ENCODE measurements at regions of chr2 and their contacts with region 1.

Region 1: GRCh38 chr2:203730076-203730729 is 23.8 kb downstream of the CD28 start:
- DNase-seq: no peak
- H3K4me3 Mint-ChIP-seq: peak overlapping the region; percentile 1
- H3K27ac Mint-ChIP-seq: peak overlapping the region; percentile 83
- H3K4me1 Mint-ChIP-seq: peaks cover 75% of the 10 kb centered on the region
- H3K27me3 Mint-ChIP-seq: no peaks in the 10 kb centered on the region

Region 2: GRCh38 chr2:203718087-203718486 is 12.1 kb before region 1 on chr2:
- intact Hi-C with region 1: loop called (anchors 1 kb)
- DNase-seq: peak; percentile 66
- H3K4me3 Mint-ChIP-seq: peak overlapping the region; percentile 48
- H3K27ac Mint-ChIP-seq: peak overlapping the region; percentile 91
- H3K4me1 Mint-ChIP-seq: peaks cover 93% of the 10 kb centered on the region
- H3K27me3 Mint-ChIP-seq: no peaks in the 10 kb centered on the region

Region 3: DNA sequence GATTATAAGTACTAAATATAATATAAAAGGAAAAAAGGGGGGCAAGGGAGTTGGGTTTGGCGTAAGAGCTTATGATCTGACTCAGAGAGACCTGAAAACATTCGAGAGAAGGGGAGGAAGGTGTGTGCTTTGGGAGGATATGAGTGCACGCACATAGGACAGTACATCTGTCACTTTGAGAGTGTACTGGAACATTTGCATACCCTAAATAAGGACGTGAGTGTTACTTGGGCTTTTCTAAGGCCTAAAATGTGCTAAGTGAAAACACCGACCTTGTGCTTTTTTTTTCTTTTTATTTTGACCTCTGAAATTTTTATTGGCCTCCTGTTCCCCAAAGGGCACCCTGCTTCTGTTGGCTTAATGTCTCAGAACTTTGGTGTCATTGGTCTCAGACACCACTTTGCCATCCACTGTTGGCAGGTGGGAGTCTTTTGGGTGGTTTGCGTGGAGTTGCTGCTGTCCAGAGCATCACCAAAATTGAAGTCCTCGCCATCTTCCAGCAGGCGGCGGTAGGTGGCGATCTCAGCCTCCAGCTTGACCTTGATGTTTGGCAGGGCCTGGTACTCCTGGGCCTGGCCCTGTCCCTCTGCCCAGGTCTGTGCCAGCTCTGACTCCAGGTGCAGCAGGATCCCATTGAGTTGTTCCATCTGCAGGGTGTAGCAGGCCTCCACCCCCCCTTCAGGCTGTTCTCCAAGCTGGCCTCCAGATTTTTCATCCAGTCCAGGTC is 33.9 kb after region 1 on chr2:
- intact Hi-C with region 1: loop called (anchors 1 kb)
- DNase-seq: no peak
- H3K4me3 Mint-ChIP-seq: no peak overlapping the region
- H3K27ac Mint-ChIP-seq: peak overlapping the region; percentile 86
- H3K4me1 Mint-ChIP-seq: peaks cover 51% of the 10 kb centered on the region
- H3K27me3 Mint-ChIP-seq: no peaks in the 10 kb centered on the region

Region 4: GRCh38 chr2:203893401-203893800 is 163.2 kb after region 1 on chr2:
- intact Hi-C with region 1: loop called (anchors 2 kb)
- DNase-seq: no peak
- H3K4me3 Mint-ChIP-seq: no peak overlapping the region
- H3K27ac Mint-ChIP-seq: peak overlapping the region; percentile 92
- H3K4me1 Mint-ChIP-seq: peaks cover 79% of the 10 kb centered on the region
- H3K27me3 Mint-ChIP-seq: no peaks in the 10 kb centered on the region